ENCODE measurements at regions of chr10 and their contacts with region 1.

Region 1: GRCh38 chr10:77391605-77392235 is 245.9 kb downstream of the KCNMA1 start:
- DNase-seq: no peak
- H3K4me3 Mint-ChIP-seq: no peak overlapping the region
- H3K27ac Mint-ChIP-seq: no peak overlapping the region
- H3K4me1 Mint-ChIP-seq: peaks cover 3% of the 10 kb centered on the region
- H3K27me3 Mint-ChIP-seq: peaks cover 10% of the 10 kb centered on the region

Region 2: DNA sequence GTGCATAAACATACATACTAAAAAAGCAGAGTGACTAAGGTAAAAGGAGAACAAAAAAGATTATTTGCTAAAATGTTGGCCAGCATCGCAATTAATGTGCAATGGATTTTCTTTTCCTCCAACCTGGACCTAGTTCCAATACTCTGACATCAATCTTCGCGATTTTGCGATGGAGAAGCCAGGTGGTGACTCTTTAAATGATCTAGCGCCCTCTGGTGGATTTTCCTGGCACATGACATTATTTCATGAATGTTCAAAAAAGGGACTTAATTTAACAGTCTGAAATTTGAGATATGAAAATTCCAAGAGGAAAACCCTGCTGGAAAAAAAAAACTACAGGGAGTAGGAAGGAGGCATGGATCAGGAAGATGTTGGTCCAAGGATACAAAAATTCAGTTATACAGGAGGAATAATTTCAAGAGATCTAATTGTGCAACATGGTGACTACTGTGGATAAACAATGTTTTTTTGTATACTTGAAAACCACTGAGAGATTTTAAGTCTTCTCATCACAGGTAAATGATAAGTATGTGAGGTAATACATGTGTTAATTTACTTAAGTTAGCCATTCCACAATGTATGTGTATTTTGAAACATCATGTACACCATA is 250.2 kb after region 1 on chr10:
- intact Hi-C with region 1: loop called (anchors 1 kb)
- DNase-seq: peak; percentile 22
- H3K4me3 Mint-ChIP-seq: no peak overlapping the region
- H3K27ac Mint-ChIP-seq: no peak overlapping the region
- H3K4me1 Mint-ChIP-seq: no peaks in the 10 kb centered on the region
- H3K27me3 Mint-ChIP-seq: peaks cover 18% of the 10 kb centered on the region

Measured in activated T-helper 1 cell treated with anti-CD3 and anti-CD28 coated beads, Interleukin-12 subunit alpha, Interleukin-12 subunit beta, Interleukin-2, Interleukin-4 antibody, amounts not matched to agents 30 ng/mL and 10 ng/mL and 1 ng/mL, durations not matched to agents 14 hours and 24 hours and 36 hours (primary cell).